ENCODE measurements at regions of chr22 and their contacts with region 1.

Region 1: GRCh38 chr22:30968924-30969539 is at the start of gene TUG1:
- DNase-seq: peak; percentile 97 to 99 (median 98)
- H3K4me3 ChIP-seq: peak within 1 kb of the TSS; percentile 68 to 80
- H3K4me3 Mint-ChIP-seq: peak within 1 kb of the TSS; percentile 89 to 96 (median 94)
- H3K27ac ChIP-seq: peak within 1 kb of the TSS; percentile 90
- H3K27ac Mint-ChIP-seq: peak within 1 kb of the TSS; percentile 94 to 98 (median 97)
- H3K4me1 ChIP-seq: peaks cover 39% of the 10 kb centered on the region
- H3K4me1 Mint-ChIP-seq: peaks cover 30 to 69% (median 52%) of the 10 kb centered on the region in 4 donors
- H3K27me3 ChIP-seq: no peaks in the 10 kb centered on the region
- H3K27me3 Mint-ChIP-seq: no peaks in the 10 kb centered on the region
- total RNA-seq, gene TUG1: 129 to 132 TPM

Region 2: DNA sequence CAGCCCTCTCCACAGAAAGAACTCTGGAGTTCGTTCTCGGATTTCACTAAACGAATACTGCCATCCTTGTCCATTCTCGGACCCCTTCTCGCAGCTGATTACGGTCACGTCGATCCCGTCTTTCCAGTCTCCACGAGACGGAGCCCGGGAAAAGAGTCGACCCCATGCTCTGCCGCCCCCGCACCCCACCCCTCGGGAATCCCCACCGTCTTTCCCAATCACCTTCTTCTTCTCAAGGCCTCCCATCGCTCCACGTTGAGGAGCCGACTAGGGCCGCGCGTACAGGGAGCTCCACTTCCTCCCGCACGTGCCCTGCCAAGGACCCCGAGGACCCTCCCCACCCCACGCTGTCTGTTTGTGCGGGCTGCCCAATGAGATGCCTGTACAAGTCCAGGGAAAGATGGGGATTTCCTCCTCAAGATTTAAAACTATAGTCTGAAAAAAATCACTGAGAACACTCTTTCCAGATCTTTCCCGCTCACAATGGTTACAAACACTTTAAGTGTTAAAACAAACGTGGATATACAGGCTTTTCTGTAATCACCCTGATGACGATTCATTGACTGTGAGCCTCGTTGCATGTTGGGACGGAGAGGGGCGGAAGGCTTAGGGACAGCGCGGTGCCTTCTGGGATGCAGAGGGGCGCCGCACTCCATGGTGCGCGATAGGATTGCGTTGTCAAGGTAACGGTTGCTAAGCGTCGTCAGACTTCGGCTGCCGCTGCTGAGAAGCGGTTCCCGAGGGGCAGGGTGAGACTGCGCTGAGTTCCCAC is 377.3 kb before region 1 on chr22 and contains the start of gene PES1:
- CTCF ChIA-PET with region 1: no interaction called
- POLR2A ChIA-PET with region 1: interaction called, 6 read pairs
- intact Hi-C with region 1: loop called (anchors 1 kb)
- DNase-seq: peak; percentile 96 to 98 (median 97)
- H3K4me3 ChIP-seq: peak within 1 kb of the TSS; percentile 50 to 99
- H3K4me3 Mint-ChIP-seq: no peak within 1 kb of the TSS
- H3K27ac ChIP-seq: peak within 1 kb of the TSS; percentile 78
- H3K27ac Mint-ChIP-seq: peak within 1 kb of the TSS in 1 of 7 donors; percentile 82
- H3K4me1 ChIP-seq: peaks cover 22% of the 10 kb centered on the region
- H3K4me1 Mint-ChIP-seq: peaks cover 0 to 10% (median 3%) of the 10 kb centered on the region in 4 donors
- H3K27me3 ChIP-seq: no peaks in the 10 kb centered on the region
- H3K27me3 Mint-ChIP-seq: peaks cover 3 to 7% of the 10 kb centered on the region in 2 donors
- total RNA-seq, gene PES1: 50.1 to 51.6 TPM

Region 3: DNA sequence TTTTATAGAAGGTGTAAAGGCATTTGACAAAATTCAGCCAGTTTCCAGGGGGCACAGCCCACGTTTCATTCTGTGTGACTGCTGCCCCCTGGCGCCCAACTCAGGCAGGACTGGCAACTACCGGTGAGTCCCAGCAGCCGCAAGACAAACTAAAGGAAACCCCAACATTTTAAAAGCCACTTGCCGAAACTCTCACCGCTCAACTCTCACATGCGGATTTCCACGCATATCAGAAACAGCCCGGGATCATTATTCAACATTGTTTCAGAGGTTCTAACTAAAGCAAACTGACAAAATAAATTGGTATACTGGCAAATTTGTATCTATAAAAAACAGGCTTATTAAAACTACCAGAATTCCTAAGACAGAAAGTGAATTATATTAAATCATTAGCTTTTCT is 48.6 kb before region 1 on chr22:
- CTCF ChIA-PET with region 1: interaction called, 35 read pairs
- POLR2A ChIA-PET with region 1: interaction called, 56 read pairs
- intact Hi-C with region 1: loop called (anchors 1 kb)
- DNase-seq: peak; percentile 71 to 78 (median 77)
- H3K4me3 ChIP-seq: no peak overlapping the region
- H3K4me3 Mint-ChIP-seq: peak overlapping the region; percentile 69 to 86 (median 76)
- H3K27ac ChIP-seq: no peak overlapping the region
- H3K27ac Mint-ChIP-seq: peak overlapping the region in 5 of 7 donors; percentile 5 to 80 (median 73)
- H3K4me1 ChIP-seq: peaks cover 23% of the 10 kb centered on the region
- H3K4me1 Mint-ChIP-seq: peaks cover 7 to 20% (median 14%) of the 10 kb centered on the region in 4 donors
- H3K27me3 ChIP-seq: no peaks in the 10 kb centered on the region
- H3K27me3 Mint-ChIP-seq: no peaks in the 10 kb centered on the region

Region 4: GRCh38 chr22:30947816-30948454 is 21.1 kb before region 1 on chr22:
- CTCF ChIA-PET with region 1: interaction called, 15 read pairs
- POLR2A ChIA-PET with region 1: interaction called, 142 read pairs
- intact Hi-C with region 1: loop called (anchors 1 kb)
- DNase-seq: peak in 4 of 5 donors; percentile 34 to 46 (median 39)
- H3K4me3 ChIP-seq: no peak overlapping the region
- H3K4me3 Mint-ChIP-seq: no peak overlapping the region
- H3K27ac ChIP-seq: no peak overlapping the region
- H3K27ac Mint-ChIP-seq: no peak overlapping the region
- H3K4me1 ChIP-seq: peaks cover 33% of the 10 kb centered on the region
- H3K4me1 Mint-ChIP-seq: peaks cover 31 to 50% (median 45%) of the 10 kb centered on the region in 4 donors
- H3K27me3 ChIP-seq: no peaks in the 10 kb centered on the region
- H3K27me3 Mint-ChIP-seq: no peaks in the 10 kb centered on the region

Region 5: GRCh38 chr22:30979932-30980331 is 10.9 kb after region 1 on chr22:
- CTCF ChIA-PET with region 1: interaction called, 7 read pairs
- POLR2A ChIA-PET with region 1: interaction called, 80 read pairs
- intact Hi-C with region 1: no loop called
- DNase-seq: no peak
- H3K4me3 ChIP-seq: no peak overlapping the region
- H3K4me3 Mint-ChIP-seq: no peak overlapping the region
- H3K27ac ChIP-seq: no peak overlapping the region
- H3K27ac Mint-ChIP-seq: no peak overlapping the region
- H3K4me1 ChIP-seq: no peaks in the 10 kb centered on the region
- H3K4me1 Mint-ChIP-seq: no peaks in the 10 kb centered on the region
- H3K27me3 ChIP-seq: no peaks in the 10 kb centered on the region
- H3K27me3 Mint-ChIP-seq: no peaks in the 10 kb centered on the region

Region 6: DNA sequence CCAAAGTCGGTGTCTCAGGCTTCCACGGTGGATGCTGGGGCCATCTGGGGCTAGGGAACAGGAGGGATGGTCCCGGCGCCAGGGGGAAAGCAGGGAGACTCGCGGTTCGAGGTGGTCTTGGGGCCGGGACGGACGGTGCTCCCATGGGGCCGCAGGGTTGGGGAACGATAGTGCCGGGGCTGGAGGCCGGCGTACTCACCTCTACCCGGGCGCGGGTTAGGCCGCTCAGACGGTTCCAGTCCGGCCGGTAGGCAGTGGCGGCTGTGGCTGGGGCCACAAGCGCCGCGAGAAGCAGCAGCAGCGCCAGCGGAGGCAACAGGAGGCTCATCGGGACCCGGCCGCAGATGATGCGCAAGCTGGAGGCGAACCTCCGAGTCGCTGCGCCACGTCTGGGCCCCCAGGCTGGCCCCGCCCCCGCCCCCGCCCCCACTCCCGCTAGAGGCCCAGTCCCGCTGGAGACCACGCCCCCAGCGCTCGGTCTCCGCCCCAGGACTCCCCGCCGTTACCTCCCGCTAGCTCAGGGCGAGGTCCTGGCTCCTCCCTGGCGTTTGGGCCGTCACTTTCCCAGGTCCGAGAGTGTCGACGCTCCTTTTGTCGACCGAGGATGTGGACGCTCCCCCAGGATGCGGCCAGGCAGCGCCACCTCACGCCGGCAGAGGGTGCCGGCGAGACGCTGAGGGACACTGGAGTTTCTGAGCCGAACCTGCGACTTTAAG is 138.3 kb after region 1 on chr22 and contains the start of gene SELENOM:
- CTCF ChIA-PET with region 1: no interaction called
- POLR2A ChIA-PET with region 1: interaction called, 10 read pairs
- intact Hi-C with region 1: no loop called
- DNase-seq: peak; percentile 84 to 90 (median 85)
- H3K4me3 ChIP-seq: peak within 1 kb of the TSS; percentile 80 to 97
- H3K4me3 Mint-ChIP-seq: peak within 1 kb of the TSS; percentile 89 to 97 (median 94)
- H3K27ac ChIP-seq: peak within 1 kb of the TSS; percentile 62
- H3K27ac Mint-ChIP-seq: peak within 1 kb of the TSS; percentile 86 to 96 (median 94)
- H3K4me1 ChIP-seq: peaks cover 20% of the 10 kb centered on the region
- H3K4me1 Mint-ChIP-seq: peaks cover 17 to 31% (median 24%) of the 10 kb centered on the region in 4 donors
- H3K27me3 ChIP-seq: no peaks in the 10 kb centered on the region
- H3K27me3 Mint-ChIP-seq: no peaks in the 10 kb centered on the region
- total RNA-seq, gene SELENOM: 64.2 to 68.6 TPM

Region 7: GRCh38 chr22:31160328-31160978 is 191.4 kb after region 1 on chr22:
- CTCF ChIA-PET with region 1: no interaction called
- POLR2A ChIA-PET with region 1: interaction called, 10 read pairs
- intact Hi-C with region 1: no loop called
- DNase-seq: peak in 3 of 5 donors; percentile 2 to 14 (median 12)
- H3K4me3 ChIP-seq: peak overlapping the region; percentile 71 to 90
- H3K4me3 Mint-ChIP-seq: peak overlapping the region; percentile 96 to 100 (median 99)
- H3K27ac ChIP-seq: peak overlapping the region; percentile 79
- H3K27ac Mint-ChIP-seq: peak overlapping the region; percentile 89 to 100 (median 99)
- H3K4me1 ChIP-seq: peaks cover 23% of the 10 kb centered on the region
- H3K4me1 Mint-ChIP-seq: peaks cover 25 to 46% (median 31%) of the 10 kb centered on the region in 4 donors
- H3K27me3 ChIP-seq: no peaks in the 10 kb centered on the region
- H3K27me3 Mint-ChIP-seq: peaks cover 0 to 1% of the 10 kb centered on the region in 2 donors